MCF 10A (cell line): ENCODE measurements at regions of chr4 and their contacts with region 1.

Region 1: DNA sequence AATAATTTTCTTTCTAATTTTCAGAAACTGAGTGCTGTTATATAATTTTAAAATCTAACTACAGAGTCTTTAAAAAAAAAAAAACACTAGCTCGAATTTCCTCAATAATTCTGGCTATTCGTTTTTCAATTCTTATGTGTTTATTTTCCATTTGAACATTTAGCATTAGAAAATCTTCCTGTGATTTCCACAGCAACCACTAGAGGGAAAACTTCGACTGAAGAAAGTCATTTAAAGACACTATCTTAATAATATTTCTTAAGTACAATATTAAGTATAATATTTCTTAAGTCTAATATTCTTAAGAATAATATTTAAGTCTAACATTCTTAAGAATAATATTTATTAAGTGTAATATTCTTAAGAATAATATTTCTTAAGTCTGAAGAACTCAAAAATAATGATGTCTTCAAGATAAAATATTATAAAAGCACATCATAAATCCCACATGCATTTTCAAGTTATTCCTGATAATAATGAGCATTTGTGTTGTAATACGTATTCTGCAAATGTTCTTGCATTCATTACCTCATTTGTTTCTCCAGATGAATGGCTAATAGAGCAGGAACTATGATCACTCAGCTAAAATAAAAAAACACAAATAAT is 118.4 kb upstream of the WDR17 start:
- DNase-seq: peak; percentile 42
- H3K4me3 Mint-ChIP-seq: no peak overlapping the region
- H3K27ac Mint-ChIP-seq: no peak overlapping the region
- H3K4me1 Mint-ChIP-seq: peaks cover 6% of the 10 kb centered on the region
- H3K27me3 Mint-ChIP-seq: no peaks in the 10 kb centered on the region
- CTCF ChIP-seq: peak; percentile 52

Region 2: GRCh38 chr4:175542786-175543185 is 404.4 kb before region 1 on chr4:
- CTCF ChIA-PET with region 1: no interaction called
- POLR2A ChIA-PET with region 1: no interaction called
- intact Hi-C with region 1: no loop called
- DNase-seq: peak; percentile 34
- H3K4me3 Mint-ChIP-seq: no peak overlapping the region
- H3K27ac Mint-ChIP-seq: no peak overlapping the region
- H3K4me1 Mint-ChIP-seq: peaks cover 6% of the 10 kb centered on the region
- H3K27me3 Mint-ChIP-seq: no peaks in the 10 kb centered on the region
- CTCF ChIP-seq: no peak

Region 3: GRCh38 chr4:175560604-175561003 is 386.6 kb before region 1 on chr4:
- CTCF ChIA-PET with region 1: interaction called, 4 read pairs
- POLR2A ChIA-PET with region 1: no interaction called
- intact Hi-C with region 1: loop called (anchors 1 kb)
- DNase-seq: peak; percentile 55
- H3K4me3 Mint-ChIP-seq: no peak overlapping the region
- H3K27ac Mint-ChIP-seq: no peak overlapping the region
- H3K4me1 Mint-ChIP-seq: peaks cover 5% of the 10 kb centered on the region
- H3K27me3 Mint-ChIP-seq: no peaks in the 10 kb centered on the region
- CTCF ChIP-seq: peak; percentile 56

Region 4: GRCh38 chr4:175961604-175962003 is 14.4 kb after region 1 on chr4:
- CTCF ChIA-PET with region 1: interaction called, 10 read pairs
- POLR2A ChIA-PET with region 1: no interaction called
- intact Hi-C with region 1: no loop called
- DNase-seq: no peak
- H3K4me3 Mint-ChIP-seq: no peak overlapping the region
- H3K27ac Mint-ChIP-seq: no peak overlapping the region
- H3K4me1 Mint-ChIP-seq: no peaks in the 10 kb centered on the region
- H3K27me3 Mint-ChIP-seq: no peaks in the 10 kb centered on the region
- CTCF ChIP-seq: no peak

Region 5: GRCh38 chr4:176123710-176124407 is 176.6 kb after region 1 on chr4:
- CTCF ChIA-PET with region 1: interaction called, 5 read pairs
- POLR2A ChIA-PET with region 1: no interaction called
- intact Hi-C with region 1: loop called (anchors 1 kb)
- DNase-seq: peak; percentile 45
- H3K4me3 Mint-ChIP-seq: no peak overlapping the region
- H3K27ac Mint-ChIP-seq: peak overlapping the region; percentile 12
- H3K4me1 Mint-ChIP-seq: peaks cover 5% of the 10 kb centered on the region
- H3K27me3 Mint-ChIP-seq: no peaks in the 10 kb centered on the region
- CTCF ChIP-seq: peak; percentile 44

Region 6: GRCh38 chr4:176277162-176277904 is 330.1 kb after region 1 on chr4:
- CTCF ChIA-PET with region 1: interaction called, 3 read pairs
- POLR2A ChIA-PET with region 1: interaction called, 3 read pairs
- intact Hi-C with region 1: loop called (anchors 5 kb)
- DNase-seq: peak; percentile 69
- H3K4me3 Mint-ChIP-seq: no peak overlapping the region
- H3K27ac Mint-ChIP-seq: peak overlapping the region; percentile 63
- H3K4me1 Mint-ChIP-seq: peaks cover 17% of the 10 kb centered on the region
- H3K27me3 Mint-ChIP-seq: no peaks in the 10 kb centered on the region
- CTCF ChIP-seq: peak; percentile 59